B cell (primary cell): ENCODE measurements at regions of chr7 and their contacts with region 1.

Region 1: GRCh38 chr7:151519765-151520418 is at the start of gene RHEB:
- DNase-seq: peak; percentile 99
- ATAC-seq: peak; percentile 81
- H3K4me3 ChIP-seq: peak within 1 kb of the TSS; percentile 63 to 79 (median 74)
- H3K4me3 Mint-ChIP-seq: peak within 1 kb of the TSS; percentile 82
- H3K27ac ChIP-seq: peak within 1 kb of the TSS; percentile 78 to 93
- H3K27ac Mint-ChIP-seq: peak within 1 kb of the TSS; percentile 95
- H3K4me1 ChIP-seq: peaks cover 18 to 27% of the 10 kb centered on the region in 2 donors
- H3K4me1 Mint-ChIP-seq: peaks cover 37% of the 10 kb centered on the region
- H3K27me3 ChIP-seq: peaks cover 0 to 4% (median 2%) of the 10 kb centered on the region in 4 experiments
- H3K27me3 Mint-ChIP-seq: peaks cover 3% of the 10 kb centered on the region
- CTCF ChIP-seq: no peak
- total RNA-seq, gene RHEB: 32.0 and 40.3 TPM in 2 replicates

Region 2: DNA sequence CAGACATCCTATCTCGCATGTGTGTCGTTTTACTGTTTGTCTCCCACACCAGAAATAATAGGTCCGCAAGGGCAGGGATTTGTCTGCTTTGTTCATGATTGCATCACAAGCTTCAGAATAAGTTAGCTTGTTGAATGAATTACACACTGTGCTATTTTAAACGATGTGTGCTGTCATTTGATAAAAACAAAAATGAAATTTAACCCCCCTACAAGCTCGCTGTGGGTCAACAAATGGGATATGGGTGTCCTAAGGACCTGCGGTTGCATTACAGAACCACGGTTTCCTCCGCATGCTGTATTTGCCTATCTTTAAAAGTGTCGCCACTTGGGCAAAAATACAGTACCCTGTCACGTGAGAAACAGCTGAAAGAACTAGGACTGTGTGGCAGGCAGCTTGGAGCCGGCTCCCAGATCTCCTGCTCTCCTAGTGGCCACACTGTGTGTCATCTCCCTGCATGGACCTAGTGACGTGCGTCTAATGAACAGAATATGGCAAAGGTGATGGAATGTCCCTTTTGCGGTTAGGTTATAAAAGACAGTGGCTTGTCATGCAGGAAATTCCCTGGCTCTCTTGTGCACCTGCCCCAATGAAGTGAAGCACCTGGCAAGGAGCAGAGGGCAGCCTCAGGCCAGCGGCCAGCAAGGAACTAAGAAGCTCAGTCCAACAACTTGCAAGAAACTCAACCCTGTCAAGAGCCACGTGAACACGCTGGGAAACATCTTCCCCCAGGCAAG is 47.1 kb before region 1 on chr7:
- CTCF ChIA-PET with region 1: no interaction called
- POLR2A ChIA-PET with region 1: interaction called, 8 read pairs
- intact Hi-C with region 1: loop called (anchors 10 kb)
- DNase-seq: peak; percentile 71
- ATAC-seq: peak; percentile 50
- H3K4me3 ChIP-seq: no peak overlapping the region
- H3K4me3 Mint-ChIP-seq: peak overlapping the region; percentile 73
- H3K27ac ChIP-seq: no peak overlapping the region
- H3K27ac Mint-ChIP-seq: peak overlapping the region; percentile 12
- H3K4me1 ChIP-seq: peaks cover 19 to 20% of the 10 kb centered on the region in 2 donors
- H3K4me1 Mint-ChIP-seq: peaks cover 25% of the 10 kb centered on the region
- H3K27me3 ChIP-seq: no peaks in the 10 kb centered on the region
- H3K27me3 Mint-ChIP-seq: no peaks in the 10 kb centered on the region
- CTCF ChIP-seq: no peak

Region 3: GRCh38 chr7:151727579-151728285 is 207.8 kb after region 1 on chr7:
- CTCF ChIA-PET with region 1: no interaction called
- POLR2A ChIA-PET with region 1: no interaction called
- intact Hi-C with region 1: loop called (anchors 1 kb)
- DNase-seq: peak; percentile 20
- ATAC-seq: peak; percentile 82
- H3K4me3 ChIP-seq: no peak overlapping the region
- H3K4me3 Mint-ChIP-seq: no peak overlapping the region
- H3K27ac ChIP-seq: no peak overlapping the region
- H3K27ac Mint-ChIP-seq: peak overlapping the region; percentile 46
- H3K4me1 ChIP-seq: peaks cover 16 to 35% of the 10 kb centered on the region in 2 donors
- H3K4me1 Mint-ChIP-seq: peaks cover 34% of the 10 kb centered on the region
- H3K27me3 ChIP-seq: no peaks in the 10 kb centered on the region
- H3K27me3 Mint-ChIP-seq: no peaks in the 10 kb centered on the region
- CTCF ChIP-seq: no peak